Activated CD4-positive, alpha-beta memory T cell treated with anti-CD3 and anti-CD28 coated beads, Interleukin-2, amount 10 ng/mL, durations not matched to agents 7 days and 5 days (primary cell): ENCODE measurements at regions of chr6 and their contacts with region 1.

Region 1: GRCh38 chr6:38702558-38703397 is at the start of gene GLO1:
- DNase-seq: peak; percentile 97
- H3K4me3 Mint-ChIP-seq: peak within 1 kb of the TSS; percentile 88
- H3K27ac Mint-ChIP-seq: peak within 1 kb of the TSS; percentile 81
- H3K4me1 Mint-ChIP-seq: peaks cover 53% of the 10 kb centered on the region
- H3K27me3 Mint-ChIP-seq: peaks cover 5% of the 10 kb centered on the region
- total RNA-seq, gene GLO1: 105 to 110 TPM

Region 2: GRCh38 chr6:38639498-38640215 is 63.1 kb before region 1 on chr6 and contains the start of gene BTBD9:
- CTCF ChIA-PET with region 1: no interaction called
- POLR2A ChIA-PET with region 1: interaction called, 15 read pairs
- DNase-seq: peak; percentile 86
- H3K4me3 Mint-ChIP-seq: peak within 1 kb of the TSS; percentile 88
- H3K27ac Mint-ChIP-seq: peak within 1 kb of the TSS; percentile 87
- H3K4me1 Mint-ChIP-seq: peaks cover 45% of the 10 kb centered on the region
- H3K27me3 Mint-ChIP-seq: no peaks in the 10 kb centered on the region
- total RNA-seq, gene BTBD9: 14.7 to 16.1 TPM

Region 3: GRCh38 chr6:38720295-38720694 is 17.5 kb after region 1 on chr6:
- CTCF ChIA-PET with region 1: interaction called, 19 read pairs
- POLR2A ChIA-PET with region 1: interaction called, 80 read pairs
- DNase-seq: no peak
- H3K4me3 Mint-ChIP-seq: no peak overlapping the region
- H3K27ac Mint-ChIP-seq: no peak overlapping the region
- H3K4me1 Mint-ChIP-seq: peaks cover 15% of the 10 kb centered on the region
- H3K27me3 Mint-ChIP-seq: peaks cover 32% of the 10 kb centered on the region

Region 4: DNA sequence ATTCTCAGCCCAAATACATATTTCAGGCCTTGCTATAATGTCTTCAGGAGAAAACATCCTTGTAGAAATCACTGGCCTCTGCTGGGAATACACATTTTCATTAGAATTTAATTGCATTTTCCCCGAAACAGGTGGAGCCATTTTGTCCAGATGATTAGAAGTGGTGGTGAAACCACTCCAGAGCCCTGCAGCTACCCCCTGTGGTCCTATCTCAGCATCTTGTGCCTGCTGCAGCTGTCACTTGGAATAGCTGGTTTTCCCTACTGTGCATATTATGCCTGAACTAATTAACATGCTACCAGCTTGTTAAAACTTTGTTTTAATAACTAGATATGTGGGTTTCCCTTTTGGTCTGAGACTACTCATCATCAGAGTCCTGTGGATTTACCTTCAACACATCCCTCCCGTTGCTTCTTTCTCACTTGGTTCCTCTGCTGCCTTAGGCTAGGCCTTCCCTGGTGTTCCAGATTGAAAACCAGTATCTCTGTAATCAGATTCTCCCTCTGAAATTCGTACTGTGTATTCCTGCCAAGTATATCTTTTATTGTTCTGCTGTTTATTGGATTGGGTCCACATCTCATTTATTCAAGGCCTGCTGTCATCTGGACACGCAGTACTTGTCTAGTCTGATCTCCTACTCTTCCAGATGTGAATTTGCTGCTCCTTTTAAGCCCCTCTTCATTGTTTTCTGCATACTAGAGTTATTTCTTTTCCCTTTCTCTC is 27.5 kb after region 1 on chr6:
- CTCF ChIA-PET with region 1: no interaction called
- POLR2A ChIA-PET with region 1: no interaction called
- DNase-seq: no peak
- H3K4me3 Mint-ChIP-seq: no peak overlapping the region
- H3K27ac Mint-ChIP-seq: no peak overlapping the region
- H3K4me1 Mint-ChIP-seq: peaks cover 17% of the 10 kb centered on the region
- H3K27me3 Mint-ChIP-seq: peaks cover 14% of the 10 kb centered on the region